ENCODE measurements at regions of chr2 and their contacts with region 1.

Region 1: GRCh38 chr2:20411361-20411894 is 35.4 kb upstream of the RHOB start:
- DNase-seq: peak; percentile 82
- ATAC-seq: peak; percentile 99
- H3K4me3 ChIP-seq: no peak overlapping the region
- H3K4me3 Mint-ChIP-seq: no peak overlapping the region
- H3K27ac ChIP-seq: no peak overlapping the region
- H3K27ac Mint-ChIP-seq: no peak overlapping the region
- H3K4me1 ChIP-seq: no peaks in the 10 kb centered on the region
- H3K4me1 Mint-ChIP-seq: peaks cover 2% of the 10 kb centered on the region
- H3K27me3 ChIP-seq: peaks cover 0 to 12% (median 3%) of the 10 kb centered on the region in 4 experiments
- H3K27me3 Mint-ChIP-seq: peaks cover 9% of the 10 kb centered on the region
- CTCF ChIP-seq: peak; percentile 80

Region 2: DNA sequence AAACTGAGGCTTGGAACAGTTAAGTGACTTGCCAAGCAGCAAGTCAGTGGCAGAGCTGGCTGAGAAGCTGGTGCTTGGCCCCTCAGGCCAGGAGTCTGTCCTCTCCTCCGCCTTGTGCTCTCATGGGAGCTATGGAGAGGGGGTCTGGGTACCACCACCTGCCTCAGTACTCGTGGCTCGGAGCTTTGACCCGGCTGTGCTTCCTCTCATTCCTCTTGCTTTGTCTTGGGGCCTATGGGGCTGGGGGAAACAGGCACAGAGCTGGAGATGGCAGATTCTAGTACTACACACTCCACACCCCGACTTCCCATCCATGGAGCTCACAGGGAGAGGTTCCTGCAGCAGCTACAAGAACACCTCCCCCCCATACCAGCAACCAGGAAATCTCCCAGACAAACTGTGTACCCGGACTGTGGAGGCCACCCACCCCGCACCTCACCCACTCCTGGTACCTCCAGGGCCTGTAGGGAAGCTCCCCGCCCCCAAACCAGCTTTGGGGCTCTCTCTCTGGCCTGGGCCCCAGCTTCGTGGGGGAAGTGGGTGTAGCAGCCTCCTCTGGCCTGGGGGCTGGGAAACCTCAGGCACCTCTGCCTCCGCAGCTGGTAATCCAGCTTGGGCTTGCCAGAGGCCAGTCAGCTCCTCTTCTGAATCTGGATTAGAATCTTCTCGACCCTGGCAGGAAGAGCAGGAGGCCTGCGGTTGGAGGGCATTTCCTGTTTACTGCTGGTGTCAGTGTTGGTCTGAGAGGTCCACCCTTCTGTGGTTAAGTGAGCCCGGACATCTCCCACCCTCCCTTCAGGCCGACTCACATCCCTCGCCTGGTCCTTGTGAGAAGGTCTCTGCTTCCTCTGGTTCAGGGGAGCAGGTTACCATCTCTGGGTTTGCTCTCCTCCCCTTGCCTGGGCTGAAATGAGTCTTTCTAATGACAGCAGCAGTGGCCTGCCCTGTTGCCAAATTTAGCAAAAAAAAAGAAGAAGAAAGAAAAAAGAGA is 13.2 kb after region 1 on chr2:
- CTCF ChIA-PET with region 1: interaction called, 148 read pairs
- POLR2A ChIA-PET with region 1: no interaction called
- intact Hi-C with region 1: no loop called
- DNase-seq: no peak
- ATAC-seq: peak; percentile 50
- H3K4me3 ChIP-seq: peak overlapping the region; percentile 5 to 52 (median 27)
- H3K4me3 Mint-ChIP-seq: peak overlapping the region; percentile 80
- H3K27ac ChIP-seq: peak overlapping the region; percentile 85 to 88
- H3K27ac Mint-ChIP-seq: peak overlapping the region; percentile 93
- H3K4me1 ChIP-seq: peaks cover 46 to 64% of the 10 kb centered on the region in 2 donors
- H3K4me1 Mint-ChIP-seq: peaks cover 49% of the 10 kb centered on the region
- H3K27me3 ChIP-seq: no peaks in the 10 kb centered on the region
- H3K27me3 Mint-ChIP-seq: no peaks in the 10 kb centered on the region
- CTCF ChIP-seq: no peak

Region 3: DNA sequence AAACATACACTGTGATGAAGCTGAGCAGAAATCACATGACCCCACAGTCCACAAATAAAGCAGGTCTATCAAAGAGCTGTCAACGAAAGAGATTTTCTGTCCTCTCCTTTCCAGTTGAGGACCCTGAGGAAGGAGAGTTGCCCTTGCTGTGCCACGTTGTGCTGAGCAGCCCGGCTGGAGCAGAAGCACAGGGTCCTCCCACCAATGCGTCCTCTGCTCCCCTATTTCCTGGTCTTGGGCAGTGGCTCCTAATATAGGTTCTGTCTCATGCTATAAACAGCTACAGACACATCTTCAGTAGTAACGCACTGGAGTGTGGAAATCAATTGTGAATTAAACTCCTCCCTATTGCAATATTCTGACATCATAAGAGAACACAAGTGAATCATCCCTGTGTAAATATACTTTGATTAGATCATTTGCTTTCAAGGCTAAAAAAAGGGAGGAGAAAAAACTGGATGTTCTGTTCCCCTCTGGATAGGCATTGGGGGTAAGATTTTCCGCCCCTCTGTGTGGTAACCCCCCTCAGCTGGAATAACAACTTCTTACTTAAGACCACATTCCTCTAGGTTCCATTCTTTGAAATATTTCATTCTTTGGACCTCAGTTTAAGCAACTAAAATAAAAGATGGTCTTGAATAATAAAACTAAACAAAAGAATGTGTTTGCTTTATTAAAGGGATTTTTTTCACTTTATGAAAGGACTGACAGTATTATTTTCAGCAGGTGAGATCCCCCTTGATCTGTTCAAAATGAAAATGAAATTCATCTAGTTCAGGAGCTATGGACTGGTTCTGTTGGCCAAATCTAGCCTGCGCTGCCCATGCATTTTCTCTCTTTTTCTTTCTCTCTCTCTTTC is 27.1 kb after region 1 on chr2:
- CTCF ChIA-PET with region 1: interaction called, 21 read pairs
- POLR2A ChIA-PET with region 1: no interaction called
- intact Hi-C with region 1: no loop called
- DNase-seq: no peak
- ATAC-seq: no peak
- H3K4me3 ChIP-seq: no peak overlapping the region
- H3K4me3 Mint-ChIP-seq: no peak overlapping the region
- H3K27ac ChIP-seq: no peak overlapping the region
- H3K27ac Mint-ChIP-seq: no peak overlapping the region
- H3K4me1 ChIP-seq: no peaks in the 10 kb centered on the region
- H3K4me1 Mint-ChIP-seq: no peaks in the 10 kb centered on the region
- H3K27me3 ChIP-seq: peaks cover 0 to 8% (median 0%) of the 10 kb centered on the region in 4 experiments
- H3K27me3 Mint-ChIP-seq: peaks cover 22% of the 10 kb centered on the region
- CTCF ChIP-seq: no peak

Region 4: GRCh38 chr2:20635675-20636584 is 224.5 kb after region 1 on chr2:
- CTCF ChIA-PET with region 1: interaction called, 128 read pairs
- POLR2A ChIA-PET with region 1: no interaction called
- intact Hi-C with region 1: no loop called
- DNase-seq: peak; percentile 68
- ATAC-seq: peak; percentile 86
- H3K4me3 ChIP-seq: no peak overlapping the region
- H3K4me3 Mint-ChIP-seq: no peak overlapping the region
- H3K27ac ChIP-seq: no peak overlapping the region
- H3K27ac Mint-ChIP-seq: no peak overlapping the region
- H3K4me1 ChIP-seq: peaks cover 0 to 2% of the 10 kb centered on the region in 2 donors
- H3K4me1 Mint-ChIP-seq: peaks cover 11% of the 10 kb centered on the region
- H3K27me3 ChIP-seq: no peaks in the 10 kb centered on the region
- H3K27me3 Mint-ChIP-seq: no peaks in the 10 kb centered on the region
- CTCF ChIP-seq: peak; percentile 77